Lower lobe of right lung (tissue), 2 donors: ENCODE measurements at regions of chr10 and their contacts with region 1.

Region 1: DNA sequence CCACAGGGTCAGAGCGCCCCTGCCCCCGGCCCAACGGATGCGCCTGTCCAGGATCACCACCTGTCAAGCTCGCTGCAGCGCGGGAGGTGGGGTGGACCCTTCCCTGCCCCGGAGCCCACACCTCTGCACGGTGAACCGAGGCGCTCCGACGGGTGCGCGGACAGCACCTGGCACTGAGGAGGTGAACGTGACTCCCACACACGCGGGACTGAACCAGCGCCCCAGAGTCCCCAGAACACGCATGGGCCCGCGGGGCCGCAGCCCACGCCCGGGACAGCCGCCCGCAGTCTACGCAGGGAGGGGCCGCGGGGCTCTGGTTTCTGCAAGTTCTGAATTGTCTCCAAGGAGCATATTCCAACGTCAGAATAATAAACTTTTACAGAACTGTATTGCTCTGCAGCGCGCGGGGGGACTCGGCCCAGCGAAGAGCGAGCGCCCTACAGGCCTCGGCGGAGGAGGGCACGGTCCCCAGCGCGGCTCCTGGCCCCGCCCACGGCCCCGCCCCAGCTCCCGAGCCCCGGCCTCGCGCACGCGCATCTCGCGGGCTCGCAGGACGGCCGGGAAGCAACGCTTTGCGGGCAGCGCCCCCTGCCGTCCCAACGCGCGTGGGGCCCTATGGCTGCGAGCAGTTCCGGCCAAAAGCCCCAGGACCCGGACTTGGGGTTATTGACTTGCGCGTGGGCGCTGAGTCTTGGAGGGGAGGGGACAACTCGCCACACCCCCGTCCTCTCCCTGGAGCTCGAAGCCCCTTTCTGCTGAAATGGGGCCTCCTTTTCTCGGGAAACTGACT is 29.7 kb downstream of the OAT start:
- DNase-seq: peak; percentile 93
- ATAC-seq: peak; percentile 98 to 99
- H3K4me3 ChIP-seq: peak overlapping the region; percentile 64
- H3K27ac ChIP-seq: peak overlapping the region; percentile 60
- H3K4me1 ChIP-seq: peaks cover 13% of the 10 kb centered on the region
- H3K27me3 ChIP-seq: no peaks in the 10 kb centered on the region
- CTCF ChIP-seq: peak; percentile 98

Region 2: DNA sequence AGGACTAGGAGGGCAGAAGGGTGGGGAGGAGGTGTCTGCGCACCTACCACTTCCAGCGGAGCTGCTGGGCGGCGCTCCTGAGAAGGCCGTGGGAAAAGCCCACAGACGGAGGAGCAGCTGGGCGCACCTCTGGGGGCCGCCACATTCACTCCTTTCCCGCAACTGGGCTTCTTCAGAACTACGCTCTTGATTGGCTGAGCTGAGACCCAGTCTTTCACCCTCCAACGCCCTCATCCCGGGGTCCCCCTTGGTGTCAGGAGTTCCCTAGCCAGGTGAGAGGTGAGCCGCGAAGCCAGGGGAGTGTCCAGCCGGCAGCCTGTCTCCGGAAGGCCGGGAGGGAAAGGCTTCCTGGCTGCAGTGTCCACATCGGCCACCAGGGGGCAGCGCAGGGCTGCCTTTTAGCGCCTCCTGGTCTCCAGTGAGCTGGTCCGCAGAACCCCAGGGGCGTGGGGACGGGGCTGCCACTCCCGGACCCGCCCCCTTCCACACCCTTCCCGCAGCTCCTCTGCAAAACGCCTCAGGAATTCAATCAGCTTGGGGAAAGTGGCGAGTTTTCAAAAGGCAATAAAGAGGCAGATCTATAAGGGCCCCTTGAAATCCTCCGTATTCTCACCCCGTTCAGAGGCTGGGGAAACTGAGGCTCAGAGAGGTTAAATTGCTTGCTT is 394.5 kb before region 1 on chr10:
- intact Hi-C with region 1: loop called (anchors 5 kb)
- DNase-seq: peak; percentile 91
- ATAC-seq: peak; percentile 87 to 91
- H3K4me3 ChIP-seq: peak overlapping the region; percentile 33
- H3K27ac ChIP-seq: no peak overlapping the region
- H3K4me1 ChIP-seq: peaks cover 37% of the 10 kb centered on the region
- H3K27me3 ChIP-seq: peaks cover 54% of the 10 kb centered on the region
- CTCF ChIP-seq: peak; percentile 100

Region 3: GRCh38 chr10:124565565-124566256 is 176.7 kb after region 1 on chr10:
- intact Hi-C with region 1: no loop called
- DNase-seq: peak; percentile 81
- ATAC-seq: peak; percentile 95 to 97
- H3K4me3 ChIP-seq: no peak overlapping the region
- H3K27ac ChIP-seq: no peak overlapping the region
- H3K4me1 ChIP-seq: no peaks in the 10 kb centered on the region
- H3K27me3 ChIP-seq: no peaks in the 10 kb centered on the region
- CTCF ChIP-seq: peak; percentile 42

Region 4: DNA sequence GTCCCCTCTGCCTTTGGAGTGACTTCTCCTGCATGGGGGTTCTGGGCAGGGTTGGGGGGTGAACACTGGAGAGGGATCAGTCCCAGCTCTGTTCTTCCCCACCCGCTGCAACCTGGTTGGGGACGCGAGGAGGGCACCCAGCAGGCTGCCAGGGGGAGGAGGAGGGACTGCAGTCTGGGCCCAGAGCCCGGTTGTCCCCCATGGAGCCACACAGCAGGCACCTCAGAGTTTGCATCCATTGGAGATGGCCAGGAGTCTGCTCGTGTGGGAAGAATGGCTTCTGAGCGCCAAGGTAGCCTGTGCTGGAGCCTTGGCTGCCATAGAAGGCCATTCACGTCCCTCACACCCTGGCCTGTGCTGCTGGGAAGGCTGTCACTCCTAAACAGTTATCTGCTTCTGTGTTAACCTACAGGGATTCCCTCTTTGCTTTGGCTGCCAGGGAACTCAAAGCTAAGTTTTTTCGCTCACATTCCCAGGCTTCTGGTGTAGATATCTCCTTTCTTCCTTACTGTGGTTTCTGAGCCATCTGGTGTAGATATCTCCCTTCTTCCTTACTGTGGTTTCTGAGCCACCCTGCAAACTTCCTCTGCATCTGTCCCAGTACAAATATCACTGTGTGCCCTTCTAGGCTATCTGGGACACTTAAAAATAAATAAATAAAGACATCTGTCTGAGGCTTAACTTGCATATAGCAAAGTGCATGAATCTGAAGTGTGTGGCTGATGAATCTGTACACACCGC is 206.3 kb after region 1 on chr10:
- intact Hi-C with region 1: no loop called
- DNase-seq: no peak
- ATAC-seq: no peak
- H3K4me3 ChIP-seq: no peak overlapping the region
- H3K27ac ChIP-seq: no peak overlapping the region
- H3K4me1 ChIP-seq: no peaks in the 10 kb centered on the region
- H3K27me3 ChIP-seq: no peaks in the 10 kb centered on the region
- CTCF ChIP-seq: no peak